ENCODE measurements at regions of chr15 and their contacts with region 1.

Region 1: GRCh38 chr15:101501703-101502373 is 12.3 kb upstream of the PCSK6 start:
- DNase-seq: peak in 1 of 2 donors; percentile 56
- ATAC-seq: peak; percentile 38

Region 2: DNA sequence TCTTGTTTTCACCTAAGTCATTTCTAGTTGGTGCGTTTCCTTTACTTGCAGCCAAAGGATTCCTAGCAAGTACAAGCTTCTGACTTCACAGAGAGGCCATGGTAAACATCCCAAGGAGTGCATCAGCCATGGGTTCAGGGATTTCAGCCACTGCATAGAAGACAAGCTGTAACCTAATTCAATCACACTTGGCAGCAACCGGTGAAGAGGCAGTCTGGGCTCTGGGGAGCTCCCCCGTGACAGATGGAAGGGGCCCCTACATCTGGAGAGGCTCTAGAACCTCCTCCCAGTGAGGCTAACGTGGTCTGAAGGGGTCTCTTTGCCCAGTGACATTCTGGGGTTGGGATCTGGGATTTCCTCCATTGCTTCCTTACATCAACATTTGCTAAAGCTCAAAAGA is 198.4 kb before region 1 on chr15:
- intact Hi-C with region 1: loop called in 1 of 2 experiments (anchors 5 kb)
- DNase-seq: no peak
- ATAC-seq: no peak

Region 3: GRCh38 chr15:101391981-101392640 is 109.7 kb before region 1 on chr15:
- intact Hi-C with region 1: no loop called
- DNase-seq: no peak
- ATAC-seq: no peak

Region 4: DNA sequence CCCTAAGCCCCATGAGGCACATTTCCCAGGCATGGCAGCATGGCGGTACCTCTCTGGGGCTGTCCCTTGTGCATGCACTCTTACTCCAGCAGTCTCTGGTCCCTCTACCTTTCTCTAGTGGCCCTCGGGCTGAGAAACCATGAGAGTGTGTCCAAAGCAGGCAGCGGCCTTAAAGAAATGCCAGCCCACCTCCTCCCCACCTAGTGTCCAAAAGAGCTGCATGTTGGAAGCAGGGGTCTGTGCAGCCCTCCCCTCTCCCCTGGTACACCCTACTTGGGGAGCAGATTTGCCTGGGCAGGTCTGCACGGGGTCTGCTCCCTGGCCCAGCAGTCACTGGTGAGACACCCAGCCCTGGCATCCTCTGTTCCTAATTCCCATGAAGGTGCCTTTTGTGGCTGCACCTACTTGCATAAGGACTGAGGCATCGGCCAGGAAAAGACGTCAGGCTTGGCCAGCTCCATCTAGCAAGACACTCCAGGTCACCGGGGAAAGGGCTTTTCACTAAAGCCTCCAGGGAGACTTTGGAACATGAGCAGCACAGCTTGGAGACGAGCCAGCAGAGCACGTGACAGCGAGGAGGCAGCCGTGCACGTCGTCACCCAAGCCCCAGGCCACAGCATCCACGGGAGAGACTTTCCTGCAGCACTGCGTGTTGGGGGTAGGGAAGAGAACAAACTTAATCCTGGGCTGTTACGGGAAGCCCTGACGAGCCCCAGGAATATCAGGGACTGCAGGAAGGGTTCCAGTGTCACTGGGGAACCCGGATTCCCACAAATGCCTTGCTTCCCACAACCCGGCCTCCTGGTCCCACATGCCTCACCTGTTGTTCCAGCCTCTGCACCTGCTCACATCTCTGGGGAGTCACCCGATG is 111.5 kb after region 1 on chr15:
- intact Hi-C with region 1: no loop called
- DNase-seq: peak; percentile 78 to 89
- ATAC-seq: peak; percentile 85

Measured in left colon (tissue), 2 donors.